Psoas muscle (tissue), 8 donors: ENCODE measurements at regions of chr6 and their contacts with region 1.

Region 1: DNA sequence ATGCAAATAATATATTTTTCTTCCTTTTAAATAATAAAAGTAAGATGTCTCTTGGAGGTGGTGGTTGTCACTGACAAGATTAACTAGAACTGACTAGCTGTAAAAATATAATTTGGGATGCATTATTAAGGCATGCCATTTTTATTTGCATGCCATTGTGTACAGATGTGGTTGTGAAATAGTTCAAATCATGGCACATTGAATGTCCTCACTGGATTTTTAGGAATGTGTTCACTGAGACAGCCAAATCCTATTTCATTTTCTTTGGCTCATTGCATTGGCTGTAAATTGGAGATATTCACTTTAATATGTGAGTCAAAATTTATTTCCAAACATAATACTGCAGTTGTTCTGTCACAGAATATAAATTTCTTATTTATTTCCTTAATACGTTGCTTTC is 62.3 kb downstream of the ESR1 start:
- DNase-seq: no peak
- ATAC-seq: peak; percentile 28 to 61 (median 46)
- H3K4me3 ChIP-seq: no peak overlapping the region
- H3K27ac ChIP-seq: no peak overlapping the region
- H3K4me1 ChIP-seq: peaks cover 6% of the 10 kb centered on the region
- H3K27me3 ChIP-seq: no peaks in the 10 kb centered on the region
- CTCF ChIP-seq: no peak

Region 2: GRCh38 chr6:151390276-151391032 is 479.3 kb before region 1 on chr6:
- intact Hi-C with region 1: no loop called
- DNase-seq: peak; percentile 98 to 99
- ATAC-seq: peak; percentile 87 to 93 (median 88)
- H3K4me3 ChIP-seq: peak overlapping the region; percentile 97
- H3K27ac ChIP-seq: peak overlapping the region; percentile 100
- H3K4me1 ChIP-seq: peaks cover 47% of the 10 kb centered on the region
- H3K27me3 ChIP-seq: no peaks in the 10 kb centered on the region
- CTCF ChIP-seq: no peak

Region 3: DNA sequence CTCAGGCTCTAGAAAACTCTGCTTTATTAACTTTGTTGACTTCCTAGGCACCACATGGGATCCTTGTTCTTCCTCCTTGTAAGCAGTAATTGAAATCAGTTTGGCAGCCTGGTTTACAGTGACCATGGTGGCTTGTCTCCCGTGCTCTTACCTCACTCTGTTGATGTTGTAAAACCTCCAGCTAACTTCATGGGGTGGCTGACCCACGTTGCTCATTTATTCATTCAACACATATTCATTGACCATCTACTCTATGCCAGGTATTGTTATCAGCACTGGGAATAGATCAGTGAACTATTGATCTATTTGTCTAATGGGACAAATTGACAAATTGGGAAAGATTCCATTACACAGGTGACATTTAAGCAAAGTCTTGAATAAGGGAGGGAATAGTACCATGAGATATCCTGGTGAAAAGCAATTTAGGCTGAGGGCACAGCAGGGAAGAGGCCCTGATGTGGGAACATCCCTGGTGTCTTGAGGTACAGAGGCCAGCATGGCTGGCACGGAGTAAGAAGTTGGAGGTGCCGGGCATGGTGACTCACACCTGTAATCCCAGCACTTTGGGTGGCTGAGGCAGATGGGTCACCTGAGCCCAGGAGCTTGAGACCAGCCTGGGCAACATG is 43.2 kb before region 1 on chr6:
- intact Hi-C with region 1: loop called in 1 of 2 experiments (anchors 5 kb)
- DNase-seq: no peak
- ATAC-seq: no peak
- H3K4me3 ChIP-seq: no peak overlapping the region
- H3K27ac ChIP-seq: no peak overlapping the region
- H3K4me1 ChIP-seq: peaks cover 2% of the 10 kb centered on the region
- H3K27me3 ChIP-seq: no peaks in the 10 kb centered on the region
- CTCF ChIP-seq: no peak

Region 4: GRCh38 chr6:151837223-151837622 is 32.6 kb before region 1 on chr6:
- intact Hi-C with region 1: no loop called
- DNase-seq: no peak
- ATAC-seq: no peak
- H3K4me3 ChIP-seq: no peak overlapping the region
- H3K27ac ChIP-seq: no peak overlapping the region
- H3K4me1 ChIP-seq: no peaks in the 10 kb centered on the region
- H3K27me3 ChIP-seq: no peaks in the 10 kb centered on the region
- CTCF ChIP-seq: no peak